Esophagus squamous epithelium (tissue), 5 donors: ENCODE measurements at regions of chr12 and their contacts with region 1.

Region 1: DNA sequence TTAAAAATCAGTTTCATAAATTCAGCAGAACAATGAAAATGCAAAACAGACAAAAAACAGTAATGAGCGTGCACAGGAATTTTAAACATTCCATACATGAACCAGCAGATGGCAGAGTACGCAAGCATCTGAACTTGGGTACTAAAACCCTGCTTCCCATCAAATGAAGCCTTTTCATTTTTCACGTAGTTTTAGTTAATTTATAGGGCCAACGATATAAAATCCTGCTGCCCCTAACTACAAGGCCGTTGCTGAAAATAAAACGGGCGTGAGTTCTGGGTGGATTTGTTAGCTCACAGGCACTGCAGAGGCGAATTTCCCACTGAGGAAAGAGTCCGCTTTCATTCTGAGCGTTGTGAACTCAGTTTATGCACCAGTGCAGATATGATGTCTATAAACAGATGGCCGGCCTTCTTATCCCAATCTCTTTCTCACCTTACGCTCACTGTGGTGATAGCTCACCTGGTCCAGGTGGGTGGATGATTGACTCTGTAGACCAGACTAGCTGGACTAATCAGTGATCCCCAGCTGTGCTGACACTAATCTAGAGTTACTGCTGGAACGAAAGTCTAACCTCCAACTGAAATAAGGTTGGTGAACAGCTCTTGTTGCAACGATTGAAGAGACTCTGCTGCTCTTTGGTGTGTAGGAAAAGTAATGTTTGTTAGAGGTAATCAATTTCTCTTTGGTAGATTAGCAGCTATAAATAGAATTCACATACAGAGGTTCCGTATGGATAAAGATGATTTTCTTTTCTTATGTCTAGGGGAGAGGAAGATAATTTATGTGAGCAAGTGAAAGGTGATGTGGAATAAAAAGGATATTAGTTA is 89.2 kb downstream of the PDZRN4 start:
- DNase-seq: no peak
- H3K4me3 ChIP-seq: no peak overlapping the region
- H3K27ac ChIP-seq: no peak overlapping the region
- H3K4me1 ChIP-seq: peaks cover 0 to 4% (median 0%) of the 10 kb centered on the region in 3 donors
- H3K27me3 ChIP-seq: peaks cover 0 to 3% (median 0%) of the 10 kb centered on the region in 4 donors
- CTCF ChIP-seq: peak in 5 of 6 experiments; percentile 39 to 65 (median 55)
- POLR2A ChIP-seq: no peak

Region 2: GRCh38 chr12:41419131-41419893 is 142.0 kb after region 1 on chr12:
- intact Hi-C with region 1: no loop called
- DNase-seq: no peak
- H3K4me3 ChIP-seq: no peak overlapping the region
- H3K27ac ChIP-seq: no peak overlapping the region
- H3K4me1 ChIP-seq: no peaks in the 10 kb centered on the region
- H3K27me3 ChIP-seq: no peaks in the 10 kb centered on the region
- CTCF ChIP-seq: no peak
- POLR2A ChIP-seq: no peak

Region 3: DNA sequence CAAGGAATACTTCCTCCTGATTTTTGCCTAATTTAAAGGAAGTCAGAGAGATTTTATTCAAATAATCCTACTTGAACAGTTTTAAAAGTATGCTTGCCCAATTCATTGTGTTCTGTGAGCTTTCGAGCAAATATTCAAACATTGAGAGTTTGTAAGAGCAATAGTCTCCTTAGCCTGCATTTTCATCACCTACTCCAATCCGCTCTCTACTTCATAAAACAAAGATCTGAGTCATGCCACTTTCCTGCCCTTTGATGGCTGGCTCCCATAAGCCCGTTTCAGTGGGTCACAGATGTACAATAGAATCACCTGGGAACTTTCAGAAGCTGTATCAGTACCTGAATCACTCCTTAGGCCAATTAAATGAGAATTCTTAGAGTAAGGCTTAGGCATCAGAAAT is 230.0 kb after region 1 on chr12:
- intact Hi-C with region 1: no loop called
- DNase-seq: no peak
- H3K4me3 ChIP-seq: no peak overlapping the region
- H3K27ac ChIP-seq: no peak overlapping the region
- H3K4me1 ChIP-seq: no peaks in the 10 kb centered on the region
- H3K27me3 ChIP-seq: peaks cover 0 to 4% (median 0%) of the 10 kb centered on the region in 4 donors
- CTCF ChIP-seq: no peak
- POLR2A ChIP-seq: no peak

Region 4: DNA sequence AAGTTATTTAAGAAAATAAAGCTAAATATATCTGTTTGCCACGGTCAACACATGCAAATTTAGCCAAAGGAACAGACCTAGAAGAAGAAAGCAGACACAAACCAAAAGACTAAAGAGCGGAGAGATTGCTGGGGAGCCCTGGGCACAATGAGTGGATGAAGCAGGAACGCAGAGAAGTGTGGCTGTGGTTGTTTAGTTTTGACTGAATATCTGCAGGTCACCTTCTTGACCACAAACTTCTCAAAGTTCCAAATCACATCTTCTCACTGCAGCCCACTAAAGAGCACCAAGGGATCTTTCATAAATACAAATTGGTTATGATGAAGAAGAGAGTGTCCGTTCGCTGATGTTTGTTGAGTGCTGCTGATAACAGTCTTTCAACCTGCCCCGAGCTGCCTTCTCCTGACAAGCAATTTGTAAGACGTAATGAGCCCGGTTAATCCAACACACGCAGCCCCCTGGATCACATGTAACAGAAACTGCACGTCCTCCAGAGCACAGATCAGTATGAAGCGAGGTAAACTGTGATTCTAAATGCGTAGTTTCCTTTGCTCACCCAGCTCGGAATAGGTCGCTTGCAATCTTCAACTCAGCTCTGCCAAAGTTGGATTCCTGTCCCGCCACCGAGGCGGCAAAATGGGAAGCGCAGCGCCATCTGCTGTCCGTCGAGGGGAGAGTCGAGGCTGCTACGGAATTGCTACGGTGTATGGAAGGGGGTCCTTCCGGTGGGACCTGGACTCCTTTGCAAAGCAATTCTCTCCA is 746.6 kb after region 1 on chr12:
- intact Hi-C with region 1: loop called (anchors 10 kb)
- DNase-seq: no peak
- H3K4me3 ChIP-seq: peak overlapping the region; percentile 14 to 60 (median 28)
- H3K27ac ChIP-seq: no peak overlapping the region
- H3K4me1 ChIP-seq: peaks cover 0 to 10% (median 0%) of the 10 kb centered on the region in 3 donors
- H3K27me3 ChIP-seq: peaks cover 0 to 21% (median 0%) of the 10 kb centered on the region in 4 donors
- CTCF ChIP-seq: peak; percentile 76 to 94 (median 84)
- POLR2A ChIP-seq: peak in 1 of 4 donors; percentile 35